ENCODE measurements at regions of chr3 and their contacts with region 1.

Region 1: GRCh38 chr3:140736863-140737460 is 59.1 kb downstream of the TRIM42 start:
- DNase-seq: peak; percentile 52 to 83 (median 61)
- H3K4me3 ChIP-seq: no peak overlapping the region
- H3K27ac ChIP-seq: no peak overlapping the region
- H3K4me1 ChIP-seq: no peaks in the 10 kb centered on the region
- H3K27me3 ChIP-seq: no peaks in the 10 kb centered on the region
- CTCF ChIP-seq: peak; percentile 27 to 70 (median 29)
- EP300 ChIP-seq: no peak
- POLR2A ChIP-seq: no peak

Region 2: DNA sequence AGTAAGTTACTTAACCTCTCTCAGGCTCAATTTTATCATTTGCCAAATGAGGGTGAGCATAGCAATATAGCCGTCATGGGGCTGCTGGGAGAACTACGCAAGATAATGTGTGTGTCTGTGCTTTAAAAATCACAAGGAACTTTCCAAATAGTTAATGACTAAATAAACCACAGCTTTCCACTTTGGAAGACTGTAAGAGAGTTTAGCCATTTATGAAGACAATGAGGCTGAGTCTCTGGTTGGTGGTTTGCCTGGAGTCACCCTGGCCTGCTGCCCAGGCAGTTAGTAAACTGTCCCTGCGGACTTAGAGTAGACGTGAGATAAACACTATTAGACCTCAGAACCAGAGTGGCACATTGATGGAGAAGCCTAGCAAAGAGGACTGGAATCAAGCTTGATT is 444.3 kb before region 1 on chr3:
- intact Hi-C with region 1: loop called in 1 of 4 experiments (anchors 10 kb)
- DNase-seq: peak in 4 of 5 donors; percentile 22 to 58 (median 42)
- H3K4me3 ChIP-seq: no peak overlapping the region
- H3K27ac ChIP-seq: no peak overlapping the region
- H3K4me1 ChIP-seq: peaks cover 5% of the 10 kb centered on the region
- H3K27me3 ChIP-seq: no peaks in the 10 kb centered on the region
- CTCF ChIP-seq: no peak
- EP300 ChIP-seq: no peak
- POLR2A ChIP-seq: no peak

Region 3: DNA sequence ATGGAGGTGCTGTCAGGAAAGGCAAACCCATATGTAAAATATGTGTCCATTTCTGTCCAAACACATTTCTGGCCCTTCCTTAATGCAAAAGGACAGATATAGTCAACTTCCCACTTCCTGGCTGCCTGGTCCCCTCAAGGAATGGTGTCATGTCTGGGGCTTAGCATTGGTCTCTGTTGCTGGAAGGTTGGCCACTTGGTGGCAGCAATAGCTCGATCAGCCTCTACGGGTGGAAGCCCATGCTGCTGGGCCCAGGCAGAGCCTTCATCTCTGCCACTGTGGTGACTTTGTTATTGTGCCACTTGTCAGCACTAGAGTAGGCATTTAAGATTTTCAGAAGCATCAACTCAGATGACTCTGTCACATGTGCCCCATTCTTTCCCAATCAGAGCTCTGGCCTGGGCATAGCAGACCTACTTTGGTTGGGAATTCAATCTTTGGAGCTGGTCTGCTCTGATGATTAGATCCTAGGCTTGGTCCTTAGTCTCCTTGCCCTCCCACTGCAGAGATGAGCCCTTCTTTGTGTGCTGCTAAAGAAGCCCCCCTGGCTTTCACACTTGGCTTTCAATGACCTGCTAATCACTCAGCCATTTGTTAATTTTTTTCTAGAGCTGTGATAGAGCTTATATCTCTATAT is 263.2 kb after region 1 on chr3:
- intact Hi-C with region 1: no loop called
- DNase-seq: peak; percentile 29 to 72 (median 58)
- H3K4me3 ChIP-seq: no peak overlapping the region
- H3K27ac ChIP-seq: no peak overlapping the region
- H3K4me1 ChIP-seq: no peaks in the 10 kb centered on the region
- H3K27me3 ChIP-seq: no peaks in the 10 kb centered on the region
- CTCF ChIP-seq: peak in 2 of 3 donors; percentile 30 to 51
- EP300 ChIP-seq: no peak
- POLR2A ChIP-seq: no peak

Measured in ovary (tissue), 10 donors.